ENCODE measurements at regions of chr3 and their contacts with region 1.

Region 1: GRCh38 chr3:129249276-129250065 is at the start of gene COPG1:
- DNase-seq: peak; percentile 89
- H3K4me3 Mint-ChIP-seq: peak within 1 kb of the TSS; percentile 96
- H3K27ac Mint-ChIP-seq: peak within 1 kb of the TSS; percentile 96
- H3K4me1 Mint-ChIP-seq: peaks cover 64% of the 10 kb centered on the region
- H3K27me3 Mint-ChIP-seq: peaks cover 6% of the 10 kb centered on the region

Region 2: GRCh38 chr3:129016356-129016719 is 233.1 kb before region 1 on chr3:
- CTCF ChIA-PET with region 1: interaction called, 17 read pairs
- DNase-seq: peak; percentile 77
- H3K4me3 Mint-ChIP-seq: peak overlapping the region; percentile 64
- H3K27ac Mint-ChIP-seq: peak overlapping the region; percentile 93
- H3K4me1 Mint-ChIP-seq: peaks cover 47% of the 10 kb centered on the region
- H3K27me3 Mint-ChIP-seq: peaks cover 3% of the 10 kb centered on the region

Region 3: GRCh38 chr3:129160891-129161859 is 88.3 kb before region 1 on chr3 and contains the start of gene ISY1:
- CTCF ChIA-PET with region 1: interaction called, 87 read pairs
- DNase-seq: peak; percentile 91
- H3K4me3 Mint-ChIP-seq: peak within 1 kb of the TSS; percentile 91
- H3K27ac Mint-ChIP-seq: peak within 1 kb of the TSS; percentile 97
- H3K4me1 Mint-ChIP-seq: peaks cover 36% of the 10 kb centered on the region
- H3K27me3 Mint-ChIP-seq: peaks cover 4% of the 10 kb centered on the region

Region 4: GRCh38 chr3:129183569-129184395 is 65.7 kb before region 1 on chr3 and contains the start of gene CNBP:
- CTCF ChIA-PET with region 1: interaction called, 30 read pairs
- DNase-seq: peak; percentile 93
- H3K4me3 Mint-ChIP-seq: peak within 1 kb of the TSS; percentile 95
- H3K27ac Mint-ChIP-seq: peak within 1 kb of the TSS; percentile 96
- H3K4me1 Mint-ChIP-seq: peaks cover 53% of the 10 kb centered on the region
- H3K27me3 Mint-ChIP-seq: no peaks in the 10 kb centered on the region

Region 5: GRCh38 chr3:129233538-129233937 is 15.9 kb before region 1 on chr3:
- CTCF ChIA-PET with region 1: interaction called, 28 read pairs
- DNase-seq: no peak
- H3K4me3 Mint-ChIP-seq: no peak overlapping the region
- H3K27ac Mint-ChIP-seq: peak overlapping the region; percentile 68
- H3K4me1 Mint-ChIP-seq: peaks cover 81% of the 10 kb centered on the region
- H3K27me3 Mint-ChIP-seq: no peaks in the 10 kb centered on the region